ENCODE measurements at regions of chr20 and their contacts with region 1.

Region 1: GRCh38 chr20:48620519-48621254 is 207.1 kb downstream of the PREX1 start:
- DNase-seq: peak; percentile 92 to 94 (median 94)
- H3K4me3 ChIP-seq: peak overlapping the region; percentile 46 to 52 (median 46)
- H3K27ac ChIP-seq: no peak overlapping the region
- H3K4me1 ChIP-seq: peaks cover 0 to 9% (median 4%) of the 10 kb centered on the region in 3 donors
- H3K27me3 ChIP-seq: no peaks in the 10 kb centered on the region
- CTCF ChIP-seq: peak; percentile 97

Region 2: GRCh38 chr20:47665221-47665991 is 955.3 kb before region 1 on chr20:
- intact Hi-C with region 1: loop called (anchors 5 kb)
- DNase-seq: peak in 3 of 5 donors; percentile 22 to 38 (median 25)
- H3K4me3 ChIP-seq: no peak overlapping the region
- H3K27ac ChIP-seq: no peak overlapping the region
- H3K4me1 ChIP-seq: peaks cover 0 to 10% (median 0%) of the 10 kb centered on the region in 3 donors
- H3K27me3 ChIP-seq: no peaks in the 10 kb centered on the region
- CTCF ChIP-seq: no peak

Region 3: DNA sequence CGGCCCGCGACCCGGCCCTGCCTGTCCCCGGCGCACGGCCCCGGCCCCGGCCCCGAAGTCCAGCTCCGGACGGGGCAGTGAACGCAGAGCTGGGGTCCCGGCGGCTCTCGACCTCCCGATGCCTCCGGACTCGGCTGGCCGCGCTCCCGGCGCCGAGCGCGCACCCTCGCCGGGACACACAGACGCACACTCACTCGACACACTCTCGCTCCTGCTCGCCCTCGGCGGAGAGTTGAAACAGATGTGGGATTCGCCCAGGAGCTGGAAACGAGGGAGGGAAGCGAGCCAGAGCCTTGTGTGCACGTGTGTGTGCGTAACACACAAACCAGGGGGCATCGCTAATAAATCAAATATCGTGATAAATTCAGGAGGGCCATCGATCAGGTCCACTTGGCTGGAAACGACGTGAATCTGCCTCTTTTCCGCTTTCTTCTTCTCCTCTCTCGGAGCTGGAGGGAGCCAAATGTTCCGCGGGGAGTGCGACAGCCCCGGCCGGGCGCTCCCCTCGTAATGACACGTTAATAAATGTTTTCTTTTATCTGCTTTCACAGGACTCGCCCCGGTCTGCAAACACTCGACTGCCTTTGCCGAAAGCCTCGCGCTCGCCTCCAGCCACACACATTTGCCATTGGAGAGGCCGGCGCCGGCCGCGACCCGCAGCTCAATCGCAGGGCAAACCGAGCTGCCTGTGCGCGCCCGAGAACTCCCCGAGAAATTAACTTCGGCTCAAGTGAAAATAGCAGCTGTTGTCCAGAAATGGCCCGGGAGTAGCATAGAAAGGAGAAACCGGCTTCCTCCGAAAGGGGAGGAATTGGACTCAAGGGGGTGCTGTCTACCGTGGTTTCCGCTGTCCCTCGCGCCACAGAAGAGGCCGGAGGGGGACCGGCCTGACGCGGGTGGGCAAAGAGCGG is 834.6 kb before region 1 on chr20:
- intact Hi-C with region 1: loop called (anchors 10 kb)
- DNase-seq: peak; percentile 88 to 96 (median 92)
- H3K4me3 ChIP-seq: peak overlapping the region; percentile 68 to 72 (median 69)
- H3K27ac ChIP-seq: peak overlapping the region; percentile 71 to 89
- H3K4me1 ChIP-seq: peaks cover 2 to 9% (median 9%) of the 10 kb centered on the region in 3 donors
- H3K27me3 ChIP-seq: no peaks in the 10 kb centered on the region
- CTCF ChIP-seq: peak; percentile 53

Region 4: GRCh38 chr20:48521026-48521879 is 99.4 kb before region 1 on chr20:
- intact Hi-C with region 1: no loop called
- DNase-seq: no peak
- H3K4me3 ChIP-seq: no peak overlapping the region
- H3K27ac ChIP-seq: no peak overlapping the region
- H3K4me1 ChIP-seq: no peaks in the 10 kb centered on the region
- H3K27me3 ChIP-seq: no peaks in the 10 kb centered on the region
- CTCF ChIP-seq: no peak

Measured in kidney (tissue), 22 donors.